A673 (cell line): ENCODE measurements at regions of chr19 and their contacts with region 1.

Region 1: GRCh38 chr19:14979476-14980255 is at the start of gene SLC1A6:
- DNase-seq: no peak
- H3K4me3 ChIP-seq: no peak within 1 kb of the TSS
- H3K27ac ChIP-seq: no peak within 1 kb of the TSS
- H3K4me1 ChIP-seq: no peaks in the 10 kb centered on the region
- H3K27me3 ChIP-seq: peaks cover 82% of the 10 kb centered on the region
- CTCF ChIP-seq: no peak
- total RNA-seq, gene SLC1A6: 0.26 TPM in 1 of 2 replicates, not detected in the other

Region 2: GRCh38 chr19:14992780-14993179 is 13.1 kb after region 1 on chr19:
- CTCF ChIA-PET with region 1: no interaction called
- POLR2A ChIA-PET with region 1: no interaction called
- intact Hi-C with region 1: no loop called
- DNase-seq: no peak
- H3K4me3 ChIP-seq: no peak overlapping the region
- H3K27ac ChIP-seq: no peak overlapping the region
- H3K4me1 ChIP-seq: no peaks in the 10 kb centered on the region
- H3K27me3 ChIP-seq: peaks cover 51% of the 10 kb centered on the region
- CTCF ChIP-seq: no peak

Region 3: DNA sequence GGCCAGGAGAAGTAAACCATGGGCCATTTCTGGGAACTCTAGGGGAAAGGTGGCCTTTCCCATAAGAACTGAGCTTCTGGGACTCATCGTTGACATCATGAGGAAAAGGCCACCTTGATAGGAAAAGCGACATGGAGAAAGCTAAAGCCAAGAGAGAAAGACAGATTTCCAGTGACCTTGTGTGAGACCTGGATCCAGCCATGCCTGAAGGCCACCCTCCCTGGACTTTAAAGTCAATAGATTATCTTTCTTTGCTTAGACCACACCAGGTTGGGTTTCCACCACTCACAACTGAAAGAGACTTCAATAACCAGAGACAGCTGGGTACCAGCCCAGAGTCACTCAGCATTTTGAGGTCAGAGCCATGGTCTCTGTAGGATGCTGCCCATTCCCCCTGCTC is 914.7 kb after region 1 on chr19:
- CTCF ChIA-PET with region 1: no interaction called
- POLR2A ChIA-PET with region 1: interaction called, 14 read pairs
- intact Hi-C with region 1: no loop called
- DNase-seq: no peak
- H3K4me3 ChIP-seq: no peak overlapping the region
- H3K27ac ChIP-seq: no peak overlapping the region
- H3K4me1 ChIP-seq: no peaks in the 10 kb centered on the region
- H3K27me3 ChIP-seq: peaks cover 4% of the 10 kb centered on the region
- CTCF ChIP-seq: no peak